ENCODE measurements at regions of chr11 and their contacts with region 1.

Region 1: DNA sequence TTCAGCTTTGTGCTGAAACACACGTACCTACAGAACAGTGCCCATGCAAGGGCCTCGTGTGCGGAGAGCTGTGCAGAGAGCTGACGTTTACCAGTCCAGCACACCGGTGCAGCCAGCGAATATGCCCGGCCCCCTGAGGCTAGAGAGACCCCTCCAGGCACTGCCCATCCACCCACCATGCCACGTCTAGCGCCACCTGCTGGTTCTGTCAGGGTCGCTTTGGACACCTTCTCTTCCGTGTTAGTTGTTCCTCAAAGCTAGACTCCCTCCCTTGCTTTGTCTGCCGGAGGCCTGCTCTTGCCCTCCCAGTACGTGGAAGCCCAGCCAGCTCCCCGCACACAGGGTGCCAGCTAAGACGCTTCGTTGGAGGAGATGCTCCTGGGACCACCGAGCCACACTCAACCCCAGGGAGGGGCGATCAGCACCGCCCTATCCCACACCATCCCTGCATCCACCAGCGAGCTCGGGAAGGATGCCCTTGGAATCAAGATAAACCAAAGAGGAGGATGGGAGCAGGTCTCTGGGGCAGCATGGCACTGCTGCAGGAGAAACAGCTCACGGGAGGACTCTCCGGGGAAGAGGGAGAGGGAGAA is 43.4 kb downstream of the CPT1A start:
- DNase-seq: peak; percentile 81
- ATAC-seq: peak; percentile 92
- H3K4me3 Mint-ChIP-seq: no peak overlapping the region
- H3K27ac Mint-ChIP-seq: no peak overlapping the region
- H3K4me1 Mint-ChIP-seq: peaks cover 6% of the 10 kb centered on the region; the same call in 1 of the 2 replicates
- H3K27me3 Mint-ChIP-seq: no peaks in the 10 kb centered on the region
- CTCF ChIP-seq: peak; percentile 89

Region 2: DNA sequence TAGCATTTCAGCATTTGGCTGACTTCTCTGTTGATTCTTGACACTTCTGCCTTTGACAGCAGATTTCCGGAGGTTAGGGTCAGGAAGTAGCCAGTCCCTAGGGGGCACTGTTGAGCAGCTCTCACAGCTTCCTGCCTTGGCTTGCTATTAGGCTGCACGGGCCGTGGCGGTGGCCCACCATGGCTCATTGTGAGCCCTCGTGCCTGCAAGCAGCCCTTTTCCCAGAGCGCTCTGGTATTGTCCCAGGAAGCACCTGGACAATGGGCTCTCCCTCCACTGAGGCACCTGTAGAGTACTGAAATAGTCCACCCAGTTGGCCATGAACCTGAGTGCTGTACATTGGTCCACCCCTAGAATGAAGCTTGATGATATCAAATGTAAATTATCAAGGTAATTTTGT is 214.2 kb before region 1 on chr11:
- CTCF ChIA-PET with region 1: interaction called, 14 read pairs
- POLR2A ChIA-PET with region 1: no interaction called
- DNase-seq: peak; percentile 87
- ATAC-seq: peak; percentile 96
- H3K4me3 Mint-ChIP-seq: no peak overlapping the region
- H3K27ac Mint-ChIP-seq: no peak overlapping the region
- H3K4me1 Mint-ChIP-seq: no peaks in the 10 kb centered on the region
- H3K27me3 Mint-ChIP-seq: no peaks in the 10 kb centered on the region
- CTCF ChIP-seq: peak; percentile 84

Region 3: DNA sequence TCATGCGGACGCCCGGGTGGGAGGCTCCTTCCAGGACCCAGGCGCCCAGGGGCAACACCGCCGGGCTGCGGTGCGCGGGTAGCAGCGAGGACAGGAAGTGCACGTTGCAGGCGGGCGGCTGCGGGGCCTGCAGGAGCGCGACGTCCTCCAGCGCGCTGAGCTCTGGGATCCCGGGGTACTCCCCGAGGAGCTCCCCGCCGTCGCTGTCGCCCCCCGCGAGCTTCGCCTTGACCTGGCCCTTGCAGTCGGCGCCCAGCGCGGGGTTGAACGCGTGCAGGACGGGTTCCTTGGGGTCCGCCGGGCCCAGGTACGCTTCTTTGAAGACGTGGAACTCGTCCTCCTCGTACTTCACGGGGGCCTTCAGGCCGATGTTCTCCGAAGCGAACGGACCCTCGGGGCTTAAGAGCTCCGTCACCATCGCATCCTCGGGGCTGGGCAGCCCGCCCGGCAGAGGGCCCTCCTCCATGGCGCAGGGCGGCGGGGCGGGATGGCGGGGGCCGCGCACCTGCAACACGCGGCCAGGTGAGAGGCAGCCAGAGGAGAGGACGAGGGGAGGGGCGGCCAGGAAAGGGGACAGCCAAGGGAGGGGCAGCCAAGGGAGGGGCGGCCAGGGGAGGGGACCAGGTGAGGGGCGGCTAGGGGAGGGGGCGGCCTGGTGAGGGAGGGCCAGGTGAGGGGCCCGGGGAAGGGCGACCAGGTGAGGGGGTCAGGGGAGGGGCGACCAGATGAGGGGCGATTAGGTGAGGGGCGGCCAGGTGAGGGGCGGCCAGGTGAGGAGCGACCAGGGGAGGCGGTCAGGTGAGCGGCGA is 47.9 kb before region 1 on chr11:
- CTCF ChIA-PET with region 1: interaction called, 22 read pairs
- POLR2A ChIA-PET with region 1: no interaction called
- DNase-seq: peak; percentile 94
- ATAC-seq: peak; percentile 58
- H3K4me3 Mint-ChIP-seq: peak overlapping the region; percentile 88
- H3K27ac Mint-ChIP-seq: peak overlapping the region; percentile 100
- H3K4me1 Mint-ChIP-seq: peaks cover 61% of the 10 kb centered on the region
- H3K27me3 Mint-ChIP-seq: no peaks in the 10 kb centered on the region
- CTCF ChIP-seq: no peak

Region 4: GRCh38 chr11:68784653-68785052 is 13.7 kb before region 1 on chr11:
- CTCF ChIA-PET with region 1: interaction called, 17 read pairs
- POLR2A ChIA-PET with region 1: no interaction called
- DNase-seq: no peak
- ATAC-seq: no peak
- H3K4me3 Mint-ChIP-seq: no peak overlapping the region
- H3K27ac Mint-ChIP-seq: no peak overlapping the region
- H3K4me1 Mint-ChIP-seq: peaks cover 9% of the 10 kb centered on the region
- H3K27me3 Mint-ChIP-seq: no peaks in the 10 kb centered on the region
- CTCF ChIP-seq: no peak

Region 5: DNA sequence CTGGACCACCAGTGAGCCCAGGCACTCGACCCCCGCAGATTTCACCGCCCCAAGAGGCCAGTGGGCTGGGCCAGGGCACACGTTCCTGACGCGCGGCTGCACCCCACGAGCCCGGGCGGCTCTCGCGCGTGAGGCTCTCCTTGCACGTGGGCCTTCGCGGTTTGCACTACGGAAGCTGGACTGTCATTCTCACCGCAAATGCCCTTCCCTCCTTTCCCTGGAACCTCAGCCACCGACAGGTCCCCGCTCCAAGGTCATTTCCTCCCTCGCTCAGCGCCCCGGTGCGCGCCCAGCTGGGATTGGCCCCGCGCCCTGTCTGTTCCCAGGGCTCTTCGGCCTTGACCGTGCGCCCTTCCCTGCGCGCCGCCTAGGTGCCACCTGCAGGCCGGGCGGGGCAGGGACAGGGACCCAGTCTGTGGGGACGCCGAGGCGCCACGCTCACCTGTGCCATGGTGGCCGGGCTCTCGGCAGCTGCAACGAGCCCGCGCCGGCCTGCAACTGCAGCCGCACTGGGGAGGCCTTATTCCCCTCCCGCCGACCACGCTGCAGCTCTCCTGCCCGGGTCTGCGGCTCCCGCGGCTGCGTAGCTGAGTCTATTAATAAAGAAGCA is 45.5 kb after region 1 on chr11:
- CTCF ChIA-PET with region 1: interaction called, 21 read pairs
- POLR2A ChIA-PET with region 1: no interaction called
- DNase-seq: peak; percentile 80
- ATAC-seq: peak; percentile 66
- H3K4me3 Mint-ChIP-seq: peak overlapping the region; percentile 71
- H3K27ac Mint-ChIP-seq: no peak overlapping the region
- H3K4me1 Mint-ChIP-seq: peaks cover 33% of the 10 kb centered on the region
- H3K27me3 Mint-ChIP-seq: peaks cover 67% of the 10 kb centered on the region
- CTCF ChIP-seq: 0 out of 2 replicates have a peak, but pooled peaks have one; percentile 21

Measured in WTC11 (cell line).